ENCODE measurements at regions of chr2 and their contacts with region 1.

Region 1: GRCh38 chr2:74502720-74503505 is 3.5 kb upstream of the LBX2 start:
- DNase-seq: peak; percentile 93
- H3K4me3 ChIP-seq: peak overlapping the region; percentile 76
- H3K27ac ChIP-seq: peak overlapping the region; percentile 56
- H3K4me1 ChIP-seq: peaks cover 33% of the 10 kb centered on the region
- H3K27me3 ChIP-seq: no peaks in the 10 kb centered on the region

Region 2: GRCh38 chr2:74587664-74588277 is 84.9 kb after region 1 on chr2:
- in situ Hi-C with region 1: loop called (anchors 5 kb)
- DNase-seq: peak; percentile 84
- H3K4me3 ChIP-seq: no peak overlapping the region
- H3K27ac ChIP-seq: no peak overlapping the region
- H3K4me1 ChIP-seq: peaks cover 29% of the 10 kb centered on the region
- H3K27me3 ChIP-seq: no peaks in the 10 kb centered on the region

Region 3: DNA sequence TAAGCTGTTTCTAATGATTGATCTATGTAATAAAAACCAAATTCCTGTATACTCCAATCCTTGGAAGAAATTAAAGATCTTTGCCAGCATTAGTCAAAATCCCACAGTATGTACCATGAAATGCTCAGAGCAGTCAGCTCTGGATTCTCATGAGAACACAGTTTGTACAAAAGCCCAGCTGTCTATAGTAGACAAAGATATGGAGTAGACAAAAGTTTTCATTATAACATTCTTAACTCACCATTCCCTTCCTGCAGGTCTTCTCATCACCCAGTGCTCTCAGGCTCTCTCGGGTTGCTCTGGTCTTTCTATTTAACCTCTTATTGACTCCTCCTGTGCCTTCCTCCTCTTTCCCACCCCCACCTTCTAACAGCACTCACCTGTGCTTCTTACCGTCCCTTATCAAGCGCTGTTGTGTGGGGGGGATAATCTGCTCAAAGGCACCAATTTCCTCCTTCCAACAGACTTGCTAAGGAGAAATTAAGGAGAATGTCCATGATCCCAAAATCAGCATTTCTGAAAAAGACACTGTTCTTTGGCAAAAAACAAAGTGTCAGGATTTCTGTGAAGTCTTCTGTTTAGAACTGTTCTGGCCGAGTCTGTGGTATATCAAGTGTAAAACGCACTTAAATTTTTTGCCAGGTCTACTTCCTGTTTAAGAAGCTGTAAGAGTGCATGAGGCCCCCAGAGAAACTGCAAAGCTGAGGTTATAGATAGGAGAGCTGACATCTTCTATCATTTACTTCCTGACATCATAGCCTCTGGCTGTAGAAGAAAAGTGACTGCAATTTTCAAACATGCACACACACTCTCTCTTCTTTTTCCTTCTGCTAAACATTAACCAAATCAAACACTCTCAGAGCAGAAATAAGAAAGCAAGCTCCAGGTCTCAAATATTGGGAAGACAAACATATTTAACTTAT is 913.8 kb after region 1 on chr2:
- in situ Hi-C with region 1: no loop called
- DNase-seq: no peak
- H3K4me3 ChIP-seq: no peak overlapping the region
- H3K27ac ChIP-seq: no peak overlapping the region
- H3K4me1 ChIP-seq: no peaks in the 10 kb centered on the region
- H3K27me3 ChIP-seq: peaks cover 20% of the 10 kb centered on the region; the same call in 1 of the 2 replicates

Measured in GM23248 (cell line).